A549 (cell line): ENCODE measurements at regions of chr14 and their contacts with region 1.

Region 1: GRCh38 chr14:75906676-75907280 is 75.0 kb downstream of the TGFB3 start:
- DNase-seq: peak; percentile 48 to 54
- ATAC-seq: peak; percentile 54 to 71; a peak in 3 of 6 replicates
- H3K4me3 ChIP-seq: no peak overlapping the region
- H3K27ac ChIP-seq: no peak overlapping the region
- H3K4me1 ChIP-seq: no peaks in the 10 kb centered on the region
- CTCF ChIP-seq: peak; percentile 89
- EP300 ChIP-seq: no peak
- POLR2A ChIP-seq: no peak
- RAD21 ChIP-seq: peak; percentile 58 to 60

Region 2: GRCh38 chr14:75717749-75718148 is 189.0 kb before region 1 on chr14:
- CTCF ChIA-PET with region 1: no interaction called
- POLR2A ChIA-PET with region 1: no interaction called
- DNase-seq: no peak
- ATAC-seq: no peak
- H3K4me3 ChIP-seq: no peak overlapping the region
- H3K27ac ChIP-seq: no peak overlapping the region
- H3K4me1 ChIP-seq: peaks cover 18% of the 10 kb centered on the region
- CTCF ChIP-seq: no peak
- EP300 ChIP-seq: no peak
- POLR2A ChIP-seq: no peak
- RAD21 ChIP-seq: no peak

Region 3: GRCh38 chr14:75820761-75821160 is 86.0 kb before region 1 on chr14:
- CTCF ChIA-PET with region 1: no interaction called
- POLR2A ChIA-PET with region 1: no interaction called
- DNase-seq: no peak
- ATAC-seq: no peak
- H3K4me3 ChIP-seq: no peak overlapping the region
- H3K27ac ChIP-seq: no peak overlapping the region
- H3K4me1 ChIP-seq: no peaks in the 10 kb centered on the region
- CTCF ChIP-seq: no peak
- EP300 ChIP-seq: no peak
- POLR2A ChIP-seq: no peak
- RAD21 ChIP-seq: no peak

Region 4: GRCh38 chr14:75842551-75842950 is 64.2 kb before region 1 on chr14:
- CTCF ChIA-PET with region 1: no interaction called
- POLR2A ChIA-PET with region 1: no interaction called
- DNase-seq: no peak
- ATAC-seq: no peak
- H3K4me3 ChIP-seq: no peak overlapping the region
- H3K27ac ChIP-seq: no peak overlapping the region
- H3K4me1 ChIP-seq: no peaks in the 10 kb centered on the region
- CTCF ChIP-seq: no peak
- EP300 ChIP-seq: no peak
- POLR2A ChIP-seq: no peak
- RAD21 ChIP-seq: no peak

Region 5: DNA sequence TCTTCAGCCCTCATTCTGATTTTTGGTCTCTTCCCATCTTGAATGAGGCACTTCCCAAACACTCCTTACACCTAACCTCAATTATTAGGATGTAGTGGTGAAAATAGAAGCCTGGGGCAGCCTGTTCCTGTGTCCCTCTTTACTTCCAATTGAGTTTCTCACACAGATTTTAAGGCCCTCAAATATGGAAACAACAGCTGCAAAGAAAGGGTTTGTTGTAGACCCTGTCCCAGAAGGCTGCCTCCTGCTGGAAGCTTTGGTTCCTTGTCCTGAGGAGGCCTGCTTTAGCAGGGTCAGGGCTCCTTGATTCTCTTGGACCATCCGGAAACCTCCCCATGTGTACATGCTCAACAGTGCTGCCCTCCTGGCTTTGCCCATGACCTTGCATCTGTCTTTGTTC is 26.3 kb before region 1 on chr14:
- CTCF ChIA-PET with region 1: interaction called, 13 read pairs
- POLR2A ChIA-PET with region 1: no interaction called
- DNase-seq: no peak
- ATAC-seq: no peak
- H3K4me3 ChIP-seq: no peak overlapping the region
- H3K27ac ChIP-seq: no peak overlapping the region
- H3K4me1 ChIP-seq: peaks cover 17% of the 10 kb centered on the region
- CTCF ChIP-seq: no peak
- EP300 ChIP-seq: no peak
- POLR2A ChIP-seq: no peak
- RAD21 ChIP-seq: no peak

Region 6: DNA sequence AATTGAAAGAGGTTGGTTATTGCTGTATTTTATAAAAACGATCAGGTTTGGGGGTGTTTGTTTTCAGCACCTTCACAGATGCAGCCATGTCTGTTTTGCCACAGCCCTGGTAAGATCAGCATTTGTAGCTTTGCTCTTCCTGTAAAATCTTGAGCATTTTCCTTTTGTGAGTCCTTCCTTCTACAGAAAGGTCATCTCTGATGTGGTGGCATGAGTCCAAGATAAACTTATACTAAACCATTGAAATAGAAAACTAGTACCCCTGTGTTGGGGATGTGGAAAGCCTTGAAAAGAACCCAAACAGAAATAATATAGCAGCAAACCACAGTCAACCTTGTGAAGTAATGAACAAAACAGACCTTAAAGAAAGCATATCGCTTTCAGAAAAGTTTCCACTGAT is 10.4 kb before region 1 on chr14:
- CTCF ChIA-PET with region 1: interaction called, 12 read pairs
- POLR2A ChIA-PET with region 1: no interaction called
- DNase-seq: no peak
- ATAC-seq: no peak
- H3K4me3 ChIP-seq: no peak overlapping the region
- H3K27ac ChIP-seq: no peak overlapping the region
- H3K4me1 ChIP-seq: no peaks in the 10 kb centered on the region
- CTCF ChIP-seq: no peak
- EP300 ChIP-seq: no peak
- POLR2A ChIP-seq: no peak
- RAD21 ChIP-seq: no peak

Region 7: GRCh38 chr14:75934998-75935628 is 28.3 kb after region 1 on chr14:
- CTCF ChIA-PET with region 1: interaction called, 17 read pairs
- POLR2A ChIA-PET with region 1: no interaction called
- DNase-seq: no peak
- ATAC-seq: no peak
- H3K4me3 ChIP-seq: no peak overlapping the region
- H3K27ac ChIP-seq: no peak overlapping the region
- H3K4me1 ChIP-seq: no peaks in the 10 kb centered on the region
- CTCF ChIP-seq: no peak
- EP300 ChIP-seq: no peak
- POLR2A ChIP-seq: no peak
- RAD21 ChIP-seq: no peak

Region 8: GRCh38 chr14:75982266-75983018 is 75.7 kb after region 1 on chr14:
- CTCF ChIA-PET with region 1: interaction called, 145 read pairs
- POLR2A ChIA-PET with region 1: no interaction called
- DNase-seq: peak; percentile 73 to 74
- ATAC-seq: peak; percentile 75 to 88
- H3K4me3 ChIP-seq: peak overlapping the region; percentile 74
- H3K27ac ChIP-seq: peak overlapping the region; percentile 66 to 83
- H3K4me1 ChIP-seq: peaks cover 22% of the 10 kb centered on the region; the same call in 2 of the 3 replicates
- CTCF ChIP-seq: peak; percentile 68
- EP300 ChIP-seq: no peak
- POLR2A ChIP-seq: no peak
- RAD21 ChIP-seq: peak; percentile 79 to 93

Region 9: DNA sequence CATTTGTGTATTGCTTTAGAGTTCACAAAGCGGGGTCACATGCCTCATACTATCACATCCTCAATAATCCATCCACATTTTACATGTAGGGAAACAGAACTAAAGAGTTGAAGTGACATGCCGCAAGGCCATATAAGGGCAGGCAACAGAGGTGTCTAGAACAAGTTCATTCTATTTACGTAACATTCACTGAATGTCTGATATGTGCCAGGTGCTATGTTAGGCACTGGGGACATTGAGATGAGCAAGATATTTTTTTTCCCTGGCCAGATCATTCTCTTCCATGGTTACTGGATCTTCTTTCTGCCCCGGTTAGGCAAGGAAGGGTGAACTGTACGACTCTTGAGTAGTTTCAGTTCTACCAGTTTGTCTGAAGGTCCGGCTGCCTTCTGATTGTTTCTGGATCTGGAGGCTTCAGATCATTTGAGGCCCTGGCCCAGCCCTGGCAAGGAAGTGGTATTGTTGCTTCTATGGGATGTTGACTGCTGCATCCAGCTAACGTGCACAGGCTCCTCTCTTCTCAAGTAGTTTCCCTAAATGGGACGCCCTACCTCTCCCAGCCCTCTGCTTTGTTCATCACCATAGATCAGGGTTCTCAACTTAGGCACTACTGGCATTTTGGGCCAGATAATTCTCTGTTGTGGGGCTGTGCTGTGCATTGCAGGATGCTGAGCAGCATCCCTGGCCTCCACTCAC is 257.0 kb after region 1 on chr14:
- CTCF ChIA-PET with region 1: no interaction called
- POLR2A ChIA-PET with region 1: no interaction called
- DNase-seq: no peak
- ATAC-seq: no peak
- H3K4me3 ChIP-seq: no peak overlapping the region
- H3K27ac ChIP-seq: no peak overlapping the region
- H3K4me1 ChIP-seq: 0 out of 3 replicates have a peak, but pooled peaks cover 7% of the 10 kb centered on the region
- CTCF ChIP-seq: no peak
- EP300 ChIP-seq: no peak
- POLR2A ChIP-seq: no peak
- RAD21 ChIP-seq: no peak